ENCODE measurements at regions of chr3 and their contacts with region 1.

Region 1: GRCh38 chr3:30649572-30650318 is 43.3 kb downstream of the TGFBR2 start:
- DNase-seq: peak; percentile 72
- H3K4me3 ChIP-seq: no peak overlapping the region
- H3K27ac ChIP-seq: peak overlapping the region; percentile 71
- H3K27me3 ChIP-seq: no peaks in the 10 kb centered on the region
- CTCF ChIP-seq: no peak

Region 2: GRCh38 chr3:30606301-30607031 is 43.3 kb before region 1 on chr3 and contains the start of gene TGFBR2:
- CTCF ChIA-PET with region 1: interaction called, 4 read pairs
- POLR2A ChIA-PET with region 1: interaction called, 12 read pairs
- DNase-seq: peak; percentile 99
- H3K4me3 ChIP-seq: peak within 1 kb of the TSS; percentile 74
- H3K27ac ChIP-seq: peak within 1 kb of the TSS; percentile 86
- H3K27me3 ChIP-seq: no peaks in the 10 kb centered on the region
- CTCF ChIP-seq: no peak
- polyA plus RNA-seq, gene TGFBR2: 155 and 158 TPM in 2 replicates

Region 3: DNA sequence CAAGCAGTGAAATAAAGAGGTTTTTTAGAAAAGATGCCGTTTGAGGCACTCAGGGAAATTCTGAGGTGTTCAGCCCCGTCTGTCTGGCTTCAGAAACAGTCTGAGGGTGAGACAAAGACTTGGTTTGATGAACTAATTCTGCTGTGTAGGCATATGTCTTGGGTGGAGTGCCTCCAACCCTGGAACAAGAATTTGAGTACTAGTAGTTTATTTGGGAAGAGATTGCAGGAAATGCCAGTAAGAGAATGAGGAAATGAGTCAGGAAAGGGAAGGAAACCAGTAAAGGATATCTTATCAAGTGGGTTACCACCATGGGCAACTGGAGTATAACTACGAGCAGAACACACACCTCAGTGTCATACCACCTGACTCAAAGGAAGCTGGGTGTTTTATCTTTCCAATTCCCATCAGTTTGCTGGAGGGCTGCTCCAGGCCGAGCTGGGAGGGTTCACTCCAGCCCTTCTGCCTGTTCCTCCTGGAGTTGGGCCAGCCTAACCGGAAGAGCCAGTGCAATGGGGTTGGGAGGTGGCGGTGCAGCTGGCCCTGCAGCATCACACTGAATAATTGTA is 32.0 kb after region 1 on chr3:
- CTCF ChIA-PET with region 1: no interaction called
- POLR2A ChIA-PET with region 1: interaction called, 11 read pairs
- DNase-seq: no peak
- H3K4me3 ChIP-seq: no peak overlapping the region
- H3K27ac ChIP-seq: peak overlapping the region; percentile 72
- H3K27me3 ChIP-seq: no peaks in the 10 kb centered on the region
- CTCF ChIP-seq: no peak

Measured in AG04450 (cell line).